ENCODE measurements at regions of chr4 and their contacts with region 1.

Region 1: GRCh38 chr4:2761035-2761923 is 5.1 kb upstream of the TNIP2 start:
- DNase-seq: peak; percentile 85
- H3K4me3 ChIP-seq: no peak overlapping the region
- H3K27ac ChIP-seq: peak overlapping the region; percentile 82 to 92 (median 88)
- H3K4me1 ChIP-seq: peaks cover 8 to 49% (median 31%) of the 10 kb centered on the region in 4 donors
- H3K27me3 ChIP-seq: no peaks in the 10 kb centered on the region
- CTCF ChIP-seq: peak in 2 of 5 experiments; percentile 37 to 55
- EP300 ChIP-seq: no peak
- POLR2A ChIP-seq: peak; percentile 57

Region 2: DNA sequence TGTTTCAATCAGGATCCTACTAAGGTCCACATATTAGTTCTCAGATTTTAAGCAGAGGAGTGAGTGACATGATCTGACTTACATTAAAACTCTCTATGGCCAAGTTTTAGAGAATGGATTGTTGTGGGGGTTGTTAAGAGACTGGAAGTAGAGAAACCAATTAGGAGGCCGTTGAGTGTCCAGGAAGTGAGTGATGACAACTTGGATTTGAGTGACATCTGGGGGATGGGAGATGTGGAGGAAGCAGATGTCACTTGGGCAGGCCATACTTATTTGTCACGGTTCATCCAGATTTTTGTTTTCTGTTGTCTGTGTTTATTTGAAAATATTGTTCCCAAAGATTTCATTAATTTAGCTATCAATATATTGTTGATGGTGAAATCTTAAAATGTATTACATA is 110.6 kb after region 1 on chr4:
- in situ Hi-C with region 1: no loop called
- intact Hi-C with region 1: loop called (anchors 10 kb)
- DNase-seq: no peak
- H3K4me3 ChIP-seq: no peak overlapping the region
- H3K27ac ChIP-seq: no peak overlapping the region
- H3K4me1 ChIP-seq: peaks cover 49 to 79% (median 53%) of the 10 kb centered on the region in 4 donors
- H3K27me3 ChIP-seq: no peaks in the 10 kb centered on the region
- CTCF ChIP-seq: no peak
- EP300 ChIP-seq: no peak
- POLR2A ChIP-seq: no peak

Region 3: DNA sequence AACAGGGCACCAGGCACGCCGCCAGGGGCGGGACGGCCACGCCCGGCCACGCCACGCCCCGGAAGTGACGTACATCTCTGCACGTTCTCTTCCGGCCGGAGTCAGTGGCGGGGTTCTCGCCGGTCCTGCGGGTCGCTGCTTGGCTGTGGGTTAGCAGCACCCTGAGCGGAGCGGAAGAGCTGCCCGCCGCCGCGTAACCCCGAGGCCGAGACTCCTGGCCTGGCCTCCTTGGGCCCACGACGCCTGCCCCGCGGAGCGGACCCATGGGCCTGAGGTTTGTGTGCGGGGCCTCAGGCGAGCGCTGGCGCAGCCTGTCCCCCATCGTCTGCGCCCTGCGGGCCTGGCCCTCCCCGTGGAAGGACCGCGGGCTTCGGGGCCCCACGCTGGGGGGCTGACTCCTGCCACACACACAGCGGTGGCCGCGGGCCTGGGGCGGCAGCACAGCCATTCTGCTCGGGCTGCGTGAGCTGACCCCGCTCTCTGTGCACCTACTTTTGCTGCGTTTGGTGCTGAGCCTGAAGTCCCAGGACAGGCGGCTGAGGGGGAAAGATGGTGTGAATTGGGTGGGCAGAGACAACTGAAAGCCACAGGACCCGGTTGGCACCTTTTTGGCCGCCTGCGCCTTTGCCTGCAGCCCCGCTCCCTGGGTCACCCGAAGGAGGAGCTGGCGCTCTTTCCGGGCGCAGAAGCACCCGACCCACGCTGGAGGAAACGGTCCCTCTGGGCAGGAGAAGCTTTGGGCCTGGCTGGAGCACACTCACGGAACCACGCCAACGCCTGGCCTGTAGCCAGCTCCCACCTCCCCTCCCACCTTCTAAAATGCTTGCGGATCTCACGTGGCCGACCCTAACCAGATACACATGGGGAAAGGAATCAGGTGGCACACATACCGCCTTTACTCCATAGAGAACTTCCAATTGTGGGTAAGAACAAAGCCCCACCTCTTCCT is 173.8 kb after region 1 on chr4:
- in situ Hi-C with region 1: loop called in 3 of 4 experiments (anchors 10 to 25 kb)
- intact Hi-C with region 1: loop called (anchors 5 kb)
- DNase-seq: peak; percentile 98
- H3K4me3 ChIP-seq: peak overlapping the region; percentile 64 to 95 (median 82)
- H3K27ac ChIP-seq: peak overlapping the region; percentile 90 to 97 (median 92)
- H3K4me1 ChIP-seq: peaks cover 11 to 51% (median 35%) of the 10 kb centered on the region in 4 donors
- H3K27me3 ChIP-seq: no peaks in the 10 kb centered on the region
- CTCF ChIP-seq: no peak
- EP300 ChIP-seq: no peak
- POLR2A ChIP-seq: peak; percentile 97

Region 4: GRCh38 chr4:2948895-2949765 is 187.9 kb after region 1 on chr4:
- in situ Hi-C with region 1: loop called (anchors 10 to 25 kb)
- intact Hi-C with region 1: no loop called
- DNase-seq: no peak
- H3K4me3 ChIP-seq: no peak overlapping the region
- H3K27ac ChIP-seq: no peak overlapping the region
- H3K4me1 ChIP-seq: no peaks in the 10 kb centered on the region
- H3K27me3 ChIP-seq: no peaks in the 10 kb centered on the region
- CTCF ChIP-seq: peak in 3 of 5 experiments; percentile 9 to 34 (median 26)
- EP300 ChIP-seq: no peak
- POLR2A ChIP-seq: no peak

Region 5: DNA sequence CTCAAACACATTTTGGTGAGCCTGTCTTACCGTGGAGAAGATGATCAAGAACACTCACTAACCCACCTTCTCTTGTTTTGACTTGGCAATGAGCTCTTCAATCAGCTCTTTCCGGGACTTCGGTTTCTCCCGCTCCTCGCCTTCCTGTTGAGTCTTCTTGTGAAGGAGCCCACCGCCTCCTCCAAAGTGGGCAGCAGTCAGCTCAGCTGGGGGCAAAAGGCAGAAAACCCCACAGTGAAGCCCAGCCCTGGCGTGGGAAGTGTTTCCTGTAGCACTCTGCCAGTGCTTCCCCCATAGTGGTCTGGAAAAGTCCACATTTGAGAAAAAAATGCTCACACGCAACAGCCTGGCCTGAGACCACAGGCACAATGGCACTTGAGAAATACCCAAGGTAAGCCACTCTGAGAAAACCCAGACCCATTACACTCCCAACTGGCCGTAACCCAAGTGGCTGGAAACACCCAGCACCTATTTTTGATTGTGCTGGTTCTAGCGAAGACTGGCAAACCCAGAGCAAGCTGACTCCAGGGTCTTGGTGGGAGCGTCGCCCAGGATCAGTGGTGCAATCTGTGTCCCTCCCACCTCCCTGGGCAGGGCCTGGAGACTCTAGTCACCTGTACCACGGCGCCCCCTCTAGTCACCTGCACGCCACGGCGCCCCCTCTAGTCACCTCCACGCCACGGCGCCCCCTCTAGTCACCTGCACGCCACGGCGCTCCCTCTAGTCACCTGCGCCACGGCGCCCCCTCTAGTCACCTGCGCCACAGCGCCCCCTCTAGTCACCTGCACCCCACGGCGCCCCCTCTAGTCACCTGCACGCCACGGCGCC is 193.3 kb after region 1 on chr4:
- in situ Hi-C with region 1: loop called (anchors 10 to 25 kb)
- intact Hi-C with region 1: no loop called
- DNase-seq: no peak
- H3K4me3 ChIP-seq: no peak overlapping the region
- H3K27ac ChIP-seq: no peak overlapping the region
- H3K4me1 ChIP-seq: peaks cover 0 to 5% (median 0%) of the 10 kb centered on the region in 4 donors
- H3K27me3 ChIP-seq: no peaks in the 10 kb centered on the region
- CTCF ChIP-seq: peak in 1 of 5 experiments; percentile 6
- EP300 ChIP-seq: no peak
- POLR2A ChIP-seq: no peak

Region 6: DNA sequence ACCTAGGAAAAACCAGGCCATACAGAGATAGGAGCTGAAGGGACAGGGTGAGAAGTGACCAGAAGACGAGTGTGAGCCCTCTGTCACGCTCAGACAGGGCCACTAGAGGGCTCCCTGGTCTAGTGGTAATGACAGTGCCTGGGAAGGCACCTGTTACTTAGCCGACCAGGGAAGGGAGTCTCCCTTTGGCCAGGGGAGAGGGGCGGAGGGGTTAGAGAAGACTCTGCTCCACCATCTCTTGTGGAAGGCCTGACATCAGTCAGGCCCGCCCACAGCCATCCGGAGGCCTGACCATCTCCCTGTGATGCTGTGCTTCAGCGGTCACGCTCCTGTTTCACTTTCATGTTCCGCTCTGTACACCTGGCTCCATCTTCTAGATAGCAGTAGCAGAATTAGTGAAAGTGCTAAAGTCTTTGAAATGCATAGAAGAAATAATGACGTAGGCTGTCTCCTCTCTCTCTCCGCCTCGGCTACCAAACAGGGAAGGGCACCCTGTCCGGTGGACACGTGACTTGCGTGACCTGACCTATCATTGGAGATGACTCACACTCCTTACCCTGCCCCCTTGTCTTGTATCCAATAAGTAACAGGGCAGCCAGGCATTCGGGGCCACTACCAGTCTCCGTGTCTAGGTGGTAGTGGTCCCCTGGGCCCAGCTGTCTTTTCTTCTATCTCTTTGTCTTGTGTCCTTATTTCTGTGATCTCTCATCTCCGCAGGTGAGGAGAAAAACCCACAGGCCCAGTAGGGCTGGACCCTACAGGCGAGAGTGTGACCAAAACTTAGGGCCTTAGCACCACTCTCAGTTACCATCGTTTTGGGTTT is 286.4 kb after region 1 on chr4:
- in situ Hi-C with region 1: no loop called
- intact Hi-C with region 1: loop called (anchors 10 kb)
- DNase-seq: peak; percentile 78
- H3K4me3 ChIP-seq: peak overlapping the region in 3 of 4 donors; percentile 28 to 49 (median 36)
- H3K27ac ChIP-seq: peak overlapping the region in 3 of 4 donors; percentile 3 to 38 (median 4)
- H3K4me1 ChIP-seq: peaks cover 0 to 16% (median 11%) of the 10 kb centered on the region in 4 donors
- H3K27me3 ChIP-seq: no peaks in the 10 kb centered on the region
- CTCF ChIP-seq: peak; percentile 68 to 78 (median 70)
- EP300 ChIP-seq: no peak
- POLR2A ChIP-seq: peak; percentile 0

Measured in transverse colon (tissue), 4 donors.